ENCODE measurements at regions of chr5 and their contacts with region 1.

Region 1: DNA sequence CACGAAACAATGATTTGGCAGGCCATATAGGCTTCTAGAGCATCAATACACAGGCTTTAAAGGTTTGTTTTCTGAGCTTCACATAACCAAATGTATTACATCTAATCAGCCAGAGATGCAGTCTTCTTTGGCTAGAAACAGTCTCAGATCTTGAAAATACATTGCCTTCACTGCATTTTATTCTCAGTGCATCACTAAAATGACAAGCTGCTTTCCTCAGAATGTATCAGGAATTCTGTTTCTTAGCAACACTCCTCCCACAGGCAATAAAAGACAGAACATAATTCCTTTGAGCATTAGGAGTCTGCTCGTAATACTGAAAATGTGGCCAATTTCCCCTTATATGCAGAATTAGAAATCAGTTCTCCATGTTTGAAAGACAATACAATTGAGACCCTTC is 36.9 kb downstream of the FEM1C start:
- DNase-seq: no peak

Region 2: DNA sequence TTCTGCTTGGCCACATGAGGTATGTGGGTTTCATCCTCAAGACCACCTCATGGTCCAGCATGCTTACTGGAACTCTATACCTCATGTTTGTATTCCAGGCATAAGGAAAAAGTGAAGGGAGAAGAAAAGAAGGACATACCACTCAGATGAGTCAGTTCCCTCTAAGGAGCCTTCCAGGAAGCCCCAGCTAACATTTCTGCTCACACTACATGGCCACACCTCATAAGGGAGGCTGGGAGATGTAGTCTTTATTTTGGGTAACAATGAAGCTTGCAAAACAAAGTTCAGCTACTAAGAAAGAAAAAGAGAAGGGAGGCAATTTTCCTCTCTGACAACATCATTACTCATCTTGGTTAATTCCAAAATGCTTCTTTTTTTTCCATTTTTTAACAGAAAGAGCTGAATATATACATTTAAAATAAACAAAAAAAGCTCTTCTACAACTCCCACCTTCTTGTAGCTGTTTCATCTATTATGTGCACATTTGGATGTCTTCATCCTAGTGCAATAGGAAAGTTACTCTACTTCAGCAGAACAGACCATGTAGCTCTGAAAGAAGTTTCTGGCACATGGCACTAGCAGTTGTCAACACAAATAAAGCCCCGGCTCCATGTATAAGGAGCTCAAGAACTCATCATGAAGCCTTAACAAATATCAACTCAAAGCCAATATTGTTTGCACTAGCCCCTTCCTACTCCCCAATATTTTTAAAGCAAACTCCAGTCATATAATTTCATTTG is 87.7 kb before region 1 on chr5:
- intact Hi-C with region 1: loop called in 1 of 2 experiments (anchors 10 kb)
- DNase-seq: no peak

Measured in posterior vena cava (tissue), 2 donors.